HCT116 (cell line): ENCODE measurements at regions of chr17 and their contacts with region 1.

Region 1: DNA sequence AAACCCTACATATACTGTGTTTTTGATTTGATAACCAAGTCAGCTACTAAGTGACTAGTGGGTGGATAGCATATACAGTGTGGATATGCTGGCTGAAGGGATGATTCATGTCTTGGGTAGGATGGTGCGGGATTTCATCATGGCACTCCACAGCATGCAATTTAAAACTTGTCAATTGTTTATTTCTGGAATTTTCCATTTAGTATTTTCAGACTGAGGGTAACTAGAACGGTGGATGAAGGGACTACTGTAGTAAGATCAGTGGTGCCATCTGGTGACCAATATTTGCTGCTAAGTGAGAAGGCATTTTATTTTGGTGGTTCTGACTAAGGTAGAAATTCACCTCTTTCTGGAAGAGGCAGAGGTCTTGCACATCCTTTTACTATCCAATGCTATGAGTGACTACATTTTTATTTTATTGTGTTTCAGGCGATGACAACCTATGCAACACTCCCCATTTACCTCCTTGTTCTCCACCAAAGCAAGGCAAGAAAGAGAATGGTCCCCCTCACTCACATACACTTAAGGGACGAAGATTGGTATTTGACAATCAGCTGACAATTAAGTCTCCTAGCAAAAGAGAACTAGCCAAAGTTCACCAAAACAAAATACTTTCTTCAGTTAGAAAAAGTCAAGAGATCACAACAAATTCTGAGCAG is 3.1 kb downstream of the CDC6 start:
- DNase-seq: peak; percentile 69
- ATAC-seq: no peak
- H3K4me3 ChIP-seq: no peak overlapping the region
- H3K27ac ChIP-seq: peak overlapping the region; percentile 15; the same call in 1 of the 2 replicates
- H3K4me1 ChIP-seq: peaks cover 14 to 19% of the 10 kb centered on the region in 2 experiments
- H3K27me3 ChIP-seq: no peaks in the 10 kb centered on the region
- CTCF ChIP-seq: peak; percentile 58 to 90 (median 69)
- POLR2A ChIP-seq: no peak
- RAD21 ChIP-seq: peak; percentile 91

Region 2: DNA sequence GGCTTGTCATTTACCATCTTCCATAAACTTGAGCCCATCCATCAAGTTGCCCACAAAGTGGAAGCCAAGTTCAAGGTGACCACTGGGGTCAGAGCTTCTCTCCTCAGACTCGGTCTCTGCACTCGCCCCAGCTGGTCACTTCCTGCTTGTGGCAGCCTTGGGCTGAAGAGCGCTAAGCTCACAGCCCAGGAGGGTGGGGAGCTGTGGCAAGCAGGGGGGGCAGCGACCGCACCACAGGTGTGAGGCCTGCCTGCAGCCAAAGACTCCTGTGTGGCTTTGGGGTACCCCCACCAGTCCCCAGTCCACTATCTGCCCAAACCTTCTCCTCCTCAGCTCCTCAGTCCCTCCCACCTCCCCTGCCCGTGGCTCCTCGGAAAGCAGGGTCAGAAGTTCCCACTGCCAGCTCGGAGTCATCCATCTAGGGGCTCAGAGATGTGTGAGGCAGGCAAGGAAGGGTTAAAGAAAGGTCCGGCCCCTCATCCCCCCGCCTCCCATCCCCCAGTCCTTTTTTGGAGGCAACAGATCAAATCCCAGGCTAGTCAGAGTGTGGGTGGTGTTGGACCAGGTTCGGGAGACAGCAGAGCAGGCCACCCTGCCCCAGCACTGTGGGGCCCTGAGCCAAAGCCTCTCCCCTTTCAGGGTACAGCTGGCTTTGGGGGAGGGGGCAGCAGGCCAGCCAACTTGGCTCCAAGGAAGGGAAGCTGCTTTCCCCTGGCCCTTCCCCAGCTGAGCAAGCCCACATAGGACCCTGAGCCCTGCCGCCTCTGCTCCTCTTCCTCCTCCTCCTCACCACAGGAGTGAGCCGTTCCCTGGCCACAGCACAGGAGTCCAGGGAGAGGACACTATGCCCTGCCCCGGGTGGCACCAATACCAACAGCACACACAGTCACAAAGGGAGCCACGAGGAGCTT is 272.3 kb before region 1 on chr17:
- CTCF ChIA-PET with region 1: interaction called, 5 read pairs
- POLR2A ChIA-PET with region 1: interaction called, 4 read pairs
- RAD21 ChIA-PET with region 1: no interaction called
- intact Hi-C with region 1: loop called (anchors 5 kb)
- DNase-seq: no peak
- ATAC-seq: no peak
- H3K4me3 ChIP-seq: no peak overlapping the region
- H3K27ac ChIP-seq: no peak overlapping the region
- H3K4me1 ChIP-seq: peaks cover 0 to 13% of the 10 kb centered on the region in 2 experiments; a peak in 2 of 4 replicates
- H3K27me3 ChIP-seq: no peaks in the 10 kb centered on the region
- CTCF ChIP-seq: no peak
- POLR2A ChIP-seq: no peak
- RAD21 ChIP-seq: no peak

Region 3: GRCh38 chr17:40191237-40192208 is 99.2 kb before region 1 on chr17:
- CTCF ChIA-PET with region 1: no interaction called
- POLR2A ChIA-PET with region 1: no interaction called
- RAD21 ChIA-PET with region 1: no interaction called
- intact Hi-C with region 1: no loop called
- DNase-seq: peak; percentile 43
- ATAC-seq: peak; percentile 90
- H3K4me3 ChIP-seq: peak overlapping the region; percentile 7 to 25; a peak in 2 of 4 replicates
- H3K27ac ChIP-seq: no peak overlapping the region
- H3K4me1 ChIP-seq: peaks cover 13 to 28% of the 10 kb centered on the region in 2 experiments
- H3K27me3 ChIP-seq: no peaks in the 10 kb centered on the region
- CTCF ChIP-seq: peak; percentile 61 to 81 (median 74)
- POLR2A ChIP-seq: no peak
- RAD21 ChIP-seq: peak; percentile 80

Region 4: DNA sequence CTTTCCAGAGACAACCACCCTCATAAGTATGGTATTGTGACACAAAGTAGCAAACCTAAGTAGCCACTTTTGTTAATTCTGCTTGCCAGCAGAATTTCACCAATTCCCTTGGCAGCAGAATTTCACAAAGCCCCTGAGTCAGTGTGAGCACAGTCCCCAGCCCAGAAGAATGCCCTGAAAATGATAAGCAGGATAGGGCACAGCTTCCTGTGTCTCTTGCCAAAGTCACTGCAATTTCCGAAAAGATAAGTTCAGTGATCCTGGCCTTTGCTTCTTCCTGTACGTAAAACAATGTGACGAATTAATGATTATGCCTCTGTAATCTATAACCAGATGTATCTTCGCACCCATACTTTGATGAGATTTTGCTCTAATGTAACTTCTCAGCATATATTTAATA is 87.6 kb before region 1 on chr17:
- CTCF ChIA-PET with region 1: interaction called, 16 read pairs
- POLR2A ChIA-PET with region 1: no interaction called
- RAD21 ChIA-PET with region 1: interaction called, 3 read pairs
- intact Hi-C with region 1: loop called (anchors 1 kb)
- DNase-seq: no peak
- ATAC-seq: no peak
- H3K4me3 ChIP-seq: no peak overlapping the region
- H3K27ac ChIP-seq: no peak overlapping the region
- H3K4me1 ChIP-seq: peaks cover 2 to 7% of the 10 kb centered on the region in 2 experiments; a peak in 3 of 4 replicates
- H3K27me3 ChIP-seq: no peaks in the 10 kb centered on the region
- CTCF ChIP-seq: no peak
- POLR2A ChIP-seq: no peak
- RAD21 ChIP-seq: no peak